H1 (cell line): ENCODE measurements at regions of chr5 and their contacts with region 1.

Region 1: GRCh38 chr5:149400304-149400703 is 21.2 kb upstream of the IL17B start:
- DNase-seq: no peak
- H3K4me3 ChIP-seq: no peak overlapping the region
- H3K27ac ChIP-seq: no peak overlapping the region
- H3K4me1 ChIP-seq: no peaks in the 10 kb centered on the region; a peak in 1 of 7 replicates
- H3K27me3 ChIP-seq: no peaks in the 10 kb centered on the region; a peak in 1 of 7 replicates
- CTCF ChIP-seq: no peak
- EP300 ChIP-seq: no peak
- POLR2A ChIP-seq: no peak
- RAD21 ChIP-seq: no peak

Region 2: DNA sequence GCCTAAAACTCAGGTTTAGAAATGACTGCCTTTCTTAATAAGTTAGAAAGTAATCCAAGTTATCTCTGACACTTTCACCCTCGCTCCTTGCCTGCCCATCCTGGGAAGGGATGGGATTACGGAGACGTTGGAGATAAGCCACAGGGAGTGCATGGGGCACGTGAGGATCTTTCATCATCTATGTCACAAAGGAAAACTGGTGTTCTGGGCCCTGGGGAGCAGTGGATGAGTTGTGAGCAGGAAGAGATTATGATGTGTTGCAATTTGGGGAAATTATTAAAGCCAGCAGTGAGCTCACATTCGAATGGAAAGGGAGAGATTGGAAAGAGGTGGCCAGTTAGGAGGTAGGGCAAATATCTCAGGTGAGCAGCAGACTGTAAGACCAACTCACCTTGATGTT is 115.8 kb before region 1 on chr5:
- CTCF ChIA-PET with region 1: no interaction called
- POLR2A ChIA-PET with region 1: no interaction called
- DNase-seq: no peak
- H3K4me3 ChIP-seq: no peak overlapping the region
- H3K27ac ChIP-seq: no peak overlapping the region
- H3K4me1 ChIP-seq: no peaks in the 10 kb centered on the region
- H3K27me3 ChIP-seq: no peaks in the 10 kb centered on the region; a peak in 1 of 7 replicates
- CTCF ChIP-seq: no peak
- EP300 ChIP-seq: no peak
- POLR2A ChIP-seq: no peak
- RAD21 ChIP-seq: no peak

Region 3: DNA sequence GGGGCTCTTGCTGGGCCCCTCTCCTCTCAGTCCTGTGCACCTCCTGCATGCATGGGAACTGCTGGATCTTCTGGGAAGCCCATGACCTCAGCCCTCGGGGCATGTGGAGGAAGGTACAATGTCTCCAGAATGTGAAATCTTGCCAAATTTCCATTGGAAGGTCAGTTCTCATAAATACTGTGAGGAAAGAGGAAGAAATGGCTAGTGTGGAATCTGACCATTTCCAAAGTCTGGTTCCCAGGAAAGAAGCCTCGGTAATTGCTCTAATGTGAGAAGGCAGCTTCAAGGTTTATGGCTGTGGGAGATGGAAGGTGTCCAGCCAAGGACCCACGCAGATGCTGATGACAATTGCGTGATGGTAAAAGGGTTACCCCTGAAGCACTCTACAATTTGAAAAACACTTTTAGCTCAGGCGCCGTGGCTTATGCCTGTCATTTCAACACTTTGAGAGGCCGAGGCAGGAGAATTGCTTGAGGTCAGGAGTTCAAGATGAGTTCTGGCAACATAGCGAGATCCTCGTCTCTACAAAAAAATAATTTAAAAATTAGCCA is 13.1 kb before region 1 on chr5:
- CTCF ChIA-PET with region 1: interaction called, 44 read pairs
- POLR2A ChIA-PET with region 1: interaction called, 3 read pairs
- DNase-seq: no peak
- H3K4me3 ChIP-seq: no peak overlapping the region
- H3K27ac ChIP-seq: no peak overlapping the region
- H3K4me1 ChIP-seq: no peaks in the 10 kb centered on the region
- H3K27me3 ChIP-seq: no peaks in the 10 kb centered on the region; a peak in 1 of 7 replicates
- CTCF ChIP-seq: no peak
- EP300 ChIP-seq: no peak
- POLR2A ChIP-seq: no peak
- RAD21 ChIP-seq: no peak